ENCODE measurements at regions of chr7 and their contacts with region 1.

Region 1: GRCh38 chr7:111763221-111763801 is 201.0 kb upstream of the IMMP2L start:
- DNase-seq: no peak
- H3K4me3 ChIP-seq: no peak overlapping the region
- CTCF ChIP-seq: peak; percentile 68

Region 2: DNA sequence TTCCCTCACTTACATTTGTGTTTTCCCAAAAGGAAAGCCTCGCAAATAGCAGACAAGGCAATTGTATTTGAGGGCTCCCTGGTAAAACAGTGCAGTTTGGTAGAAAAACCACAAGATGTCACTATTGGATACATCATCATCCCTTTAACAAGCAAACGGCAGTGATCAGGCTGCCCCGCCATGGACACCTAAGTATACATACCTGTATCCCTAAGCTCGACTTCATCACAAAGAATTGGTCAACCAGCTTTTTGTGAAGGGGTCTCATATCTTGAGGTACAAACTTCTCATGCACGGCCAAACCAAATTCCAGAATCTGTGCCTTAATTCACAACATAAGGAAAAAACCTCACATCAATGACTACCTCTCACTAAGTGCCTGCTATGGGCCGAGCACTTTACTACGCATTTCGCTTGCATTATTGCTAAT is 21.5 kb before region 1 on chr7:
- CTCF ChIA-PET with region 1: interaction called, 15 read pairs
- POLR2A ChIA-PET with region 1: no interaction called
- DNase-seq: no peak
- H3K4me3 ChIP-seq: no peak overlapping the region
- CTCF ChIP-seq: peak; percentile 62

Region 3: DNA sequence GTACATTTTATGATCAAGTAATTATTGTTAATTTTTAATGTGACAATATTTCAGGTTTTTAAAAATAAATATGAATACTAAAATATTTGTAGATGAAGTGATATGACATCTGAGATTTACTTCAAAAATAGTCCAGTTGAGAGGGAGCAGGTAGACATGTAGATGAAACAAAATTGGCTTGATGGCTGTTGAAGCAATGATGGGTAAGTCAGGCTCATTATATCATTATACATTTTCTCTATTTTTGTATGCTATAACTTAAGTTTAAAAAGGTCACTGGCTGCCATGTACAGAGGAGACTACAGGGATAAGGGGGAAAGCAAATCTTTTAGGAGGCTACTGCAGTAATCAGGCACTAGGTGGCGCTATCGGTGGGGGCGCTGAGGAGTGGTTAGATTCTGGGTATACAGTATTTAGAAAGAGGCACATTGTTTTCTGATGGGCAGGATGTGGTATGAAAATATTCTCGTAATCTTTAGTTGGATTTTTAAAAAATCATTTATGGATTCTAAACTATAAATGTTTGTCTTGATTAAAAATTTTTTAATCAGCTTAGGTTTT is 11.2 kb before region 1 on chr7:
- CTCF ChIA-PET with region 1: interaction called, 24 read pairs
- POLR2A ChIA-PET with region 1: no interaction called
- DNase-seq: no peak
- H3K4me3 ChIP-seq: no peak overlapping the region
- CTCF ChIP-seq: peak; percentile 80

Region 4: DNA sequence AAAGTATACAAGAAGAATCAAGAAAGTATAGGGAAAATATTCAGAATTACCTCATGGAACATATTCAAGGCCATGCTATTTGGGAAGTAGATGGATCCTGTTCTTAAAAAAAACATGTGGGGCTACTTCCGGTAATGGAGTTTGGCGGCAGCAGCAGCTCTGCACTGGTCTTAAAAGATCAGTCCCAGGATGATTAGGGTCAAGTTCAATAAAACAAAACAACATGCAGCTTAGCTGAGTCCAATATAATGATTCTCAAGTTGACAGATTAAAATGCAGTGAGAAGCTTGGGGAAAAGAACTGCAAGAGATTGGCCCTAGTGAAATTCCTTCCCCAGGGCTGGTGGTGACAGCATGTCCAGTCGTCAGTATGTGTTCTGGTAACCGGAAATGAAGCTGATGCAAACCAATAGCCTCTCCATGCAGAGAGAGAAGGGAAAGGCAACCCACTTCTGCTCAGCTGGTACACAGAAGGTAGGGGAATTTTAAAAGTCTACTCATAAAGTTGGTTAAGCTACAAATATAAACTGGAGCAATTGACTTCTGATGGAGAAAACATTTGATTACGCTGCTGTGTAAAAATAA is 104.1 kb after region 1 on chr7:
- CTCF ChIA-PET with region 1: interaction called, 12 read pairs
- POLR2A ChIA-PET with region 1: no interaction called
- DNase-seq: no peak
- H3K4me3 ChIP-seq: no peak overlapping the region
- CTCF ChIP-seq: no peak

Region 5: GRCh38 chr7:112414855-112415490 is 651.7 kb after region 1 on chr7:
- CTCF ChIA-PET with region 1: interaction called, 11 read pairs
- POLR2A ChIA-PET with region 1: no interaction called
- DNase-seq: no peak
- H3K4me3 ChIP-seq: no peak overlapping the region
- CTCF ChIP-seq: peak; percentile 45